Heart left ventricle (tissue), 16 donors: ENCODE measurements at regions of chr1 and their contacts with region 1.

Region 1: DNA sequence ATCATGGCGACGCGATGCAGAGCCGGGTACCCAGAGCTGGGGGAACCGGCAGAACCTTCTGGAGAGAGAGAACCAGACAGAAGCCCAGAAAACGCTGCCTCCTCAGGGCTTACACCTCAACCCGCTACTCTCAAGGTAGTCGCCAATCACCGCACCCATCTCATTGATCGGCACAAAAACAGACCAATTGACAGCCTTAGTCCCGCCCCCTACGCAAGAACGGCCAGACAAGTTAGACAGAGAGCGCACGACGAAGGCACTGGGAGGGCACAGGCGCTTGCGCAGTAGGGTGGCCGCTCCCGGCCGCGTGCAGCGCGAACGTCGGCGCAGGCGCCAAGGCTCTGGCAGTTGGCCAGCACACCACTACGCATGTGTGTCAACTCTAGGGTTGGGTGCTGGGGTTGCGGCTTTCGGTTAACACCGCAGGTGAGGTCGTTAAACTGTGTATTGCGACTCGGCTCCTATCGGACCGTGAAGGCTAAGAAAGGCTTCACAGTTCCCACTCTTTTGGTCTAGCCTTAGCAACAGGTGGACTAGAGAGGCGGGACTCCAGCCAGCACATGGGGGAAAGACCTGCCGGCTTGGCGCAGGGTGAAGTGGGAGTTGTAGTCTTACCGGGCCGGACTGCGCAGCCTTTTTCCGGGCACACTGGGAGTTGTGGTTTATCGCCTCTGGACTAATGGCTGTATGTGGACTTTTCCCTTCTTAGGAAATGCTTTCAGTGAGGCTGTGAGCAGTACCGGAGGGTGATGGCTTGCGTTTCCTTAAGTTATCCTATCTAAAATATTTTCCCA is at the starts of genes CCT3 and TSACC:
- DNase-seq: peak; percentile 99 to 100 (median 99)
- ATAC-seq: peak; percentile 96 to 98 (median 97)
- H3K4me3 ChIP-seq: peak within 1 kb of the TSS; percentile 46 to 98 (median 73)
- H3K27ac ChIP-seq: peak within 1 kb of the TSS; percentile 54 to 96 (median 85)
- H3K4me1 ChIP-seq: peaks cover 6 to 25% (median 20%) of the 10 kb centered on the region in 12 donors
- H3K27me3 ChIP-seq: no peaks in the 10 kb centered on the region
- CTCF ChIP-seq: no peak
- POLR2A ChIP-seq: peak in 1 of 2 donors; percentile 82
- total RNA-seq, gene CCT3: 105 to 152 (median 143) TPM
- total RNA-seq, gene TSACC: 0.36 to 0.81 TPM in 2 of 9 donors, not detected in the others

Region 2: GRCh38 chr1:156282479-156283222 is 55.7 kb before region 1 on chr1 and contains the start of gene SMG5:
- intact Hi-C with region 1: loop called in 2 of 10 experiments (anchors 1 to 2 kb)
- DNase-seq: peak; percentile 98 to 99 (median 98)
- ATAC-seq: peak; percentile 88 to 92 (median 88)
- H3K4me3 ChIP-seq: peak within 1 kb of the TSS; percentile 68 to 100 (median 84)
- H3K27ac ChIP-seq: peak within 1 kb of the TSS; percentile 84 to 98 (median 92)
- H3K4me1 ChIP-seq: peaks cover 5 to 59% (median 30%) of the 10 kb centered on the region in 12 donors
- H3K27me3 ChIP-seq: no peaks in the 10 kb centered on the region
- CTCF ChIP-seq: no peak
- POLR2A ChIP-seq: peak; percentile 59 to 91
- total RNA-seq, gene SMG5: 60.6 to 104 (median 89.4) TPM